ENCODE measurements at regions of chr14 and their contacts with region 1.

Region 1: GRCh38 chr14:24838945-24839616 is 205.1 kb upstream of the GZMB start:
- DNase-seq: no peak
- ATAC-seq: peak; percentile 83

Region 2: DNA sequence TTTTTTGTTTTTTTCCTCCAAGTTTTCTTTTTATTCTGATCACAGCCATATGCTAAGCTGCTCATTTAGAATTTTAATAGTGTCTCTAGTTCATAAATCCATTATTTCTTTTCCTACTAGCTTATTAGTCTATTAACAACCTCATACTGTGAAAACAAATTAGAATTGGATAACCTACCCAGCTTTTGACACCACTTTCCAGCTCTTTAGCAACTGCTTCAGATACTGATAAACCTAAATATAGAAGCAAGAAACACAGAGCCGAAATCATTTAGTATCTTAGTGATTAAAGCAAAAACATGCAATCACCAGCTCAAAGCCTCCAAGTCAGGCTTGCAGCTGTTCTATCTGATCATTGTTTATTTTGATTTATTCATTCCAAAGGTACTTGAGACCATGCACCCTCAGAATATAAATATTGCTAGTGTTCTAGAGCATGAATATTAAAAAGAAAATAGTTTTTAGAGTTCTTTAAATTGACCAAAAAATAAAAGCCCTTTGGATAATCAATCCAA is 89.4 kb after region 1 on chr14:
- intact Hi-C with region 1: loop called (anchors 5 kb)
- DNase-seq: no peak
- ATAC-seq: no peak